Esophagus squamous epithelium (tissue), 5 donors: ENCODE measurements at regions of chr1 and their contacts with region 1.

Region 1: GRCh38 chr1:15128520-15129313 is 24.8 kb upstream of the TMEM51 start:
- DNase-seq: no peak
- H3K4me3 ChIP-seq: no peak overlapping the region
- H3K27ac ChIP-seq: no peak overlapping the region
- H3K4me1 ChIP-seq: no peaks in the 10 kb centered on the region
- H3K27me3 ChIP-seq: peaks cover 0 to 7% (median 0%) of the 10 kb centered on the region in 4 donors
- CTCF ChIP-seq: peak; percentile 85 to 95 (median 92)
- POLR2A ChIP-seq: no peak

Region 2: DNA sequence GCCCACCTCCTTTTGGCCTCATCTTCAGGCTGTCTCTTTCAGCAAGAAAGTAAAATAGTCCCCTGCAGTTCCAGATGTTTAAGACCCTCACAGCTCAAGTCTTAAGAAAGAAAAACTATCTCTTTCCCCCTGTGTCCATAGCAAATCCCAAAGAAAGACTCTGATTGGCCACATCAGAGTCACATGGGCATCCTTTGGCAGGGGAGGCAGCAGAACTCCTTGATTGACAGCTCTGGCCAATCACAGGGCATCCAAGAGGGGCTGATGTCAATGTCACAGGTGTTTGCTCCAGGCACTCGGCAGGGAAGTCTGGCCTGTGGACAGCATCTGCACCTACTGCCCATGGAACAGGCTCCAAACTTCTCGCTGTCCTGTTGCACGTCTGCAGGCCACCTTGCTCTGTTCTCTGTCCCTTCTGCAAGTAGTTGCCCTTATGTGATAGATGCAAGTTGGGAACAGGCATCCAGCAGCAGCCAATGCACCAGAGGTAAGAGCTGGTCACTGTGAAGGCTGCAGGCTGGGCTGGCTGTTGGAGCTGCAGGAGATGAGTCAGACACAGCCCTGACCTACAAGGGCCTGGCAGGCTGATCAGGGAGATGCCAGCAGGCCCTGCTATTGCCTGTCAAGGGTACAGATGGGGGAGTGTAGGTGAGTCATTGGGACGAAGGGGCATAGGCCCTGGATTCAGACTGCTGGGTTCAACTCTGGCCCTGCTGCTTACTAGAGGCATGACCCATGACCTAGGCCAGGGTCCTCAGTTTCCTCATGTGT is 72.0 kb before region 1 on chr1:
- intact Hi-C with region 1: no loop called
- DNase-seq: no peak
- H3K4me3 ChIP-seq: no peak overlapping the region
- H3K27ac ChIP-seq: no peak overlapping the region
- H3K4me1 ChIP-seq: no peaks in the 10 kb centered on the region
- H3K27me3 ChIP-seq: no peaks in the 10 kb centered on the region
- CTCF ChIP-seq: no peak
- POLR2A ChIP-seq: no peak

Region 3: GRCh38 chr1:15218287-15219279 is 89.9 kb after region 1 on chr1:
- intact Hi-C with region 1: loop called (anchors 10 kb)
- DNase-seq: no peak
- H3K4me3 ChIP-seq: no peak overlapping the region
- H3K27ac ChIP-seq: no peak overlapping the region
- H3K4me1 ChIP-seq: peaks cover 0 to 29% (median 16%) of the 10 kb centered on the region in 3 donors
- H3K27me3 ChIP-seq: no peaks in the 10 kb centered on the region
- CTCF ChIP-seq: no peak
- POLR2A ChIP-seq: no peak

Region 4: GRCh38 chr1:15272009-15272788 is 143.5 kb after region 1 on chr1:
- intact Hi-C with region 1: loop called (anchors 5 kb)
- DNase-seq: no peak
- H3K4me3 ChIP-seq: peak overlapping the region in 1 of 4 donors; percentile 4
- H3K27ac ChIP-seq: no peak overlapping the region
- H3K4me1 ChIP-seq: peaks cover 0 to 10% (median 0%) of the 10 kb centered on the region in 3 donors
- H3K27me3 ChIP-seq: peaks cover 0 to 6% (median 0%) of the 10 kb centered on the region in 4 donors
- CTCF ChIP-seq: peak in 5 of 6 experiments; percentile 74 to 91 (median 79)
- POLR2A ChIP-seq: no peak

Region 5: GRCh38 chr1:15304701-15305467 is 176.2 kb after region 1 on chr1:
- intact Hi-C with region 1: loop called (anchors 5 kb)
- DNase-seq: no peak
- H3K4me3 ChIP-seq: no peak overlapping the region
- H3K27ac ChIP-seq: no peak overlapping the region
- H3K4me1 ChIP-seq: peaks cover 0 to 8% (median 0%) of the 10 kb centered on the region in 3 donors
- H3K27me3 ChIP-seq: no peaks in the 10 kb centered on the region
- CTCF ChIP-seq: peak; percentile 81 to 95 (median 91)
- POLR2A ChIP-seq: no peak